Breast epithelium (tissue), 4 donors: ENCODE measurements at regions of chr18 and their contacts with region 1.

Region 1: DNA sequence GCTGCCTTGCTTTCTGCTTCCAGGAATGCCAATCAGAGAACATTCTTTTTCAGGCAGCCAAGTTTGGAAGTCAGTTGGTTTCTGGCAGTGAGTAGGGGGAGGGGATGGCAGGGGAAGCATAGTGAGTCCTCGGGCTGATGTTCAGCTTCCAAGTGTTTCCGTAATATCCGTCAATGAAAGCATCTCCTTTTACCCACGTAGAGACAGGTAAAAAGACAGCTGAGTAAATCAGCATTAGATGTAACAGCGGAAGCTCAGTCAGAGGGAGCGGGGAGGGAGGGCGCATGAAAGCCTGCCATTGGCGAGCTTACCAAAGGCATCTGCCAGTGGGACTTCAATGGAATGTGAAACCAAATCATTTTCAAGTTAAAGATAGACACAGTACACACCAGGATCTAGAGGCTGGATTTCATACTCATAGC is 117.1 kb upstream of the DTNA start:
- DNase-seq: peak; percentile 55
- H3K4me3 ChIP-seq: peak overlapping the region; percentile 32 to 51 (median 37)
- H3K27ac ChIP-seq: peak overlapping the region; percentile 45 to 59
- H3K4me1 ChIP-seq: no peaks in the 10 kb centered on the region
- H3K27me3 ChIP-seq: no peaks in the 10 kb centered on the region
- CTCF ChIP-seq: no peak
- POLR2A ChIP-seq: no peak

Region 2: GRCh38 chr18:33596178-33596854 is 996.7 kb before region 1 on chr18:
- intact Hi-C with region 1: no loop called
- DNase-seq: no peak
- H3K4me3 ChIP-seq: no peak overlapping the region
- H3K27ac ChIP-seq: no peak overlapping the region
- H3K4me1 ChIP-seq: no peaks in the 10 kb centered on the region
- H3K27me3 ChIP-seq: no peaks in the 10 kb centered on the region
- CTCF ChIP-seq: no peak
- POLR2A ChIP-seq: no peak

Region 3: DNA sequence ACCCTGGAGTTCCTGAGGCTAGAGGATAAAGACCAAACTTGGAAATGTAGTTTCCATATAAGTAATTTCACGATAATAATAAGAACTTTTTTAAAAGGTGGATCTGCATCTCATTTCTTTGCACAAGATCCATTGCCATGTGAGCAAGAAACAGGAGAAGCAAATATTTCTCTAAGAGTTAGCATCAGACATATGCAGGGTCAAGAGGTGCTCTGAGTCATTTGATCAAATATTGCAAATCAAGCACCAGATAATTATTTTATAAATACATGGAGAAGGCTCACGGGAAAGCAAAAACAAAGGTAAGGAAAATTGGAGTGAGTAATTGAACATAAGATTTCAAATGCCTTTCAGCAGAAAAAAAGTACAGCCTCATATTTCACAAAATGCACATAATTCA is 235.1 kb after region 1 on chr18:
- intact Hi-C with region 1: loop called (anchors 5 kb)
- DNase-seq: no peak
- H3K4me3 ChIP-seq: no peak overlapping the region
- H3K27ac ChIP-seq: peak overlapping the region in 1 of 2 donors; percentile 46
- H3K4me1 ChIP-seq: no peaks in the 10 kb centered on the region
- H3K27me3 ChIP-seq: no peaks in the 10 kb centered on the region
- CTCF ChIP-seq: no peak
- POLR2A ChIP-seq: no peak